HepG2 (cell line): ENCODE measurements at regions of chr1 and their contacts with region 1.

Region 1: DNA sequence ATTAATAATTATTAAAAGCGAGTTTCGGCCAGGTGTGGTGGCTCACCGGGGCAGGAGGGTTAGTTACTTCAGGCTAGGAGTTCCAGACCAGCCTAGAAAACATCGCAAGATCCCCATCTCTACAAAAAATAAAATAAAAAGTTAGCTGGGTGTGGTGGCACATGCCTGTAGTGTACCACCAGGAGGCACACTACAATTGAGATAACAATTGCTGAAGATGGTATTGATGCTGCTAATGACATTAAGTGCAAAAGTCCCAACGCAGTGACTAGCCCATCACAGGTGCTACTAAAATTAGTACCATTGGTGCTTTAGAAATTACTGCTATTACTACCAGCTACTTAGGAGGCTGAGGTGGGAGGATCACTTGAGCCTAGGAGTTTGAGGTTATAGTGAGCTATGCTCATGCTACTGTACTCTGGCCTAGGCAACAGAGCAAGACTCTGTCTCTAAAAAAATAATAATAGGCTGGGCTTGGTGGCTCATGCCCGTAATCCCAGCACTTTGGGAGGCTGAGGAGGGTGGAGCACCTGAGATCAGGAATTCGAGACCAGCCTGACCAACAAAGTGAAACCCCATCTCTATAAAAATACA is 156.6 kb downstream of the GREM2 start:
- DNase-seq: no peak
- ATAC-seq: peak; percentile 69
- H3K4me3 ChIP-seq: no peak overlapping the region
- H3K27ac ChIP-seq: no peak overlapping the region
- H3K4me1 ChIP-seq: peaks cover 6% of the 10 kb centered on the region; the same call in 1 of the 2 replicates
- H3K27me3 ChIP-seq: no peaks in the 10 kb centered on the region
- CTCF ChIP-seq: peak; percentile 64
- EP300 ChIP-seq: no peak
- POLR2A ChIP-seq: no peak
- RAD21 ChIP-seq: no peak

Region 2: GRCh38 chr1:240242601-240243144 is 212.7 kb before region 1 on chr1:
- CTCF ChIA-PET with region 1: no interaction called
- POLR2A ChIA-PET with region 1: no interaction called
- in situ Hi-C with region 1: no loop called
- intact Hi-C with region 1: no loop called
- DNase-seq: no peak
- ATAC-seq: no peak
- H3K4me3 ChIP-seq: no peak overlapping the region
- H3K27ac ChIP-seq: no peak overlapping the region
- H3K4me1 ChIP-seq: no peaks in the 10 kb centered on the region
- H3K27me3 ChIP-seq: no peaks in the 10 kb centered on the region; a peak in 1 of 5 replicates
- CTCF ChIP-seq: no peak
- EP300 ChIP-seq: no peak
- POLR2A ChIP-seq: no peak
- RAD21 ChIP-seq: no peak

Region 3: DNA sequence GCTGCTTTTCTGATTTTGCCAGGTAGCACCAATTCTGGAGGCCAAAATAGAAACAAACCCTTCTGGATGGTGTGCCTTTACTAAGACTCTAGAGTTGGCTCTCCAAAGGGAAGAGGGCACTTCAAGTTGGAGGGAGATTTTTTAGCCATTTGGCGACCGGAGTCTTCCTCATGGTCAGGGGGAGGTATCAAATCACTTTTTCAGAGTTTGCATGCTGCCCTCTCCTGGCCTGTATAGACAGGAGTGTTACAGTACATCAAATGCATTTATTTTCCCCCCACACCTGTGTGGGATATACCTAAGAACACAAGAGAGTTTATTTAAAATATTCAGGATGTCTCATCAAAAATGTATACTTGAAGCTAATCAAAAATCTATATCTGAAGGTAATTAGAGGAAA is 153.4 kb after region 1 on chr1:
- CTCF ChIA-PET with region 1: no interaction called
- POLR2A ChIA-PET with region 1: no interaction called
- in situ Hi-C with region 1: no loop called
- intact Hi-C with region 1: loop called (anchors 1 kb)
- DNase-seq: no peak
- ATAC-seq: peak; percentile 79
- H3K4me3 ChIP-seq: no peak overlapping the region
- H3K27ac ChIP-seq: no peak overlapping the region
- H3K4me1 ChIP-seq: peaks cover 16% of the 10 kb centered on the region
- H3K27me3 ChIP-seq: peaks cover 0 to 22% of the 10 kb centered on the region in 2 experiments
- CTCF ChIP-seq: peak; percentile 58
- EP300 ChIP-seq: no peak
- POLR2A ChIP-seq: no peak
- RAD21 ChIP-seq: no peak